CD4-positive, alpha-beta T cell (primary cell): ENCODE measurements at regions of chr9 and their contacts with region 1.

Region 1: DNA sequence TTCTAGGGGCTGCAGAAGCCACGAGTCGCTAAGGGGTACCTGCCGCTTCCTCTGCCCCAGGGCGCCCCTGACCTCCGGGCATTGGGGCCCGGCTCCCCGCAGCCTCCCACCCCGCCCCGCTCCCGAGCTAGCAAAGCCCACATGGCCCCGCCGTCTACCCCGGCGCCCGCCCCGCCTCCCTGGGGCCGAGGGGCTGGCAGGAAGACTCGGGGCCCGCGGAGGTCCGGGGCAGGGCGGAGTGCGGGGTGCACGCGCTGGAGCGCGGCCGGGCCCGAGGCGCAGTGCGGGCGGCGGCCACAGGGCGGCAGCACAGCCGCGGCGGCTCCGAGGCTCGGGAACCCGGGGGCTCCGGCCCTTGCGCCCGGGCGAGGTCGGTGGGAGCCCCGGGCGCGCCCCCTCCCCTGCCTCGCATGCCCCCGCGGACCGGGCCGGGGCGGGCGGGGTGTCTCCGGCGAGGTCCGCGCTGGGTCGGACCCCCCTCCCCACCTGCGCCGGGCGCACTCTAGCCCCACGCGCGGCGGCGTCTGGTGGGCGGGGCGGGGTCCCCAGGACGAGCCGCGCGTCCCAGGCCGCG is 6.7 kb downstream of the NRARP start:
- DNase-seq: peak in 11 of 14 experiments; percentile 26 to 79 (median 42)
- ATAC-seq: peak; percentile 89
- H3K4me3 ChIP-seq: peak overlapping the region; percentile 17
- H3K4me3 Mint-ChIP-seq: no peak overlapping the region
- H3K27ac ChIP-seq: no peak overlapping the region
- H3K27ac Mint-ChIP-seq: no peak overlapping the region
- H3K4me1 ChIP-seq: peaks cover 15% of the 10 kb centered on the region
- H3K4me1 Mint-ChIP-seq: no peaks in the 10 kb centered on the region
- H3K27me3 ChIP-seq: peaks cover 62 to 65% of the 10 kb centered on the region in 2 experiments
- H3K27me3 Mint-ChIP-seq: peaks cover 41% of the 10 kb centered on the region
- CTCF ChIP-seq: no peak

Region 2: GRCh38 chr9:137406876-137407589 is 111.7 kb after region 1 on chr9:
- CTCF ChIA-PET with region 1: no interaction called
- POLR2A ChIA-PET with region 1: no interaction called
- intact Hi-C with region 1: loop called (anchors 2 kb)
- DNase-seq: peak; percentile 42 to 82 (median 68)
- ATAC-seq: peak; percentile 99
- H3K4me3 ChIP-seq: no peak overlapping the region
- H3K4me3 Mint-ChIP-seq: no peak overlapping the region
- H3K27ac ChIP-seq: no peak overlapping the region
- H3K27ac Mint-ChIP-seq: no peak overlapping the region
- H3K4me1 ChIP-seq: peaks cover 29% of the 10 kb centered on the region
- H3K4me1 Mint-ChIP-seq: no peaks in the 10 kb centered on the region
- H3K27me3 ChIP-seq: peaks cover 0 to 10% of the 10 kb centered on the region in 2 experiments
- H3K27me3 Mint-ChIP-seq: peaks cover 5% of the 10 kb centered on the region
- CTCF ChIP-seq: peak; percentile 65

Region 3: DNA sequence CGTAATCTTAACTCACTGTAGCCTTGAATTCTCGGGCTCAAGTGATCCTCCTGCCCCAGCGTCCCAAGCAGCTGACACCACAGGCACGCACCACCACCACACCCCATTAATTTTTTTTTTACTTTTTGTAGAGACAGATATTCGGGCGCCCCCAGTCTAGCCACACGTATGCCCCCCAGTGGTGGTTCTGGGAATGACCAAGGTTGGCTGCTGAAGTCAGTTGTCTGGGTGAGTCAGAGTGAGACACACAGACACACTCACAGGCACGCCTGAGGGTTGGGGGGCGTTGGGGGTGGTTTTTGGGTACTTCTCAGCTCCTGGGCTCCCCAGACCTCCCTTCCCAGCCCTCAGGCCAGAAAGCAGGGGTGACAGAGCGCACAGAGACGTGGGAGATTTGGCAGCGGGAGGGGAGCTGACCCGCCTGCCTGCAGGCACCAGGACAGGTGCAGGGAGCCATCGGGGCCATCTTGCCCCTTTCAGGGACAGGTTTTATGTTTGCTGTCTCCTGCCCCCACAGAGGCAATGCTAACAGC is 150.0 kb after region 1 on chr9:
- CTCF ChIA-PET with region 1: no interaction called
- POLR2A ChIA-PET with region 1: no interaction called
- intact Hi-C with region 1: loop called in 1 of 2 experiments (anchors 5 kb)
- DNase-seq: peak; percentile 75 to 91 (median 84)
- ATAC-seq: peak; percentile 74
- H3K4me3 ChIP-seq: no peak overlapping the region
- H3K4me3 Mint-ChIP-seq: peak overlapping the region; percentile 49
- H3K27ac ChIP-seq: no peak overlapping the region
- H3K27ac Mint-ChIP-seq: peak overlapping the region; percentile 19
- H3K4me1 ChIP-seq: peaks cover 35% of the 10 kb centered on the region
- H3K4me1 Mint-ChIP-seq: peaks cover 31% of the 10 kb centered on the region
- H3K27me3 ChIP-seq: peaks cover 0 to 2% of the 10 kb centered on the region in 2 experiments
- H3K27me3 Mint-ChIP-seq: peaks cover 17% of the 10 kb centered on the region
- CTCF ChIP-seq: peak; percentile 79

Region 4: GRCh38 chr9:137521405-137521985 is 226.2 kb after region 1 on chr9:
- CTCF ChIA-PET with region 1: no interaction called
- POLR2A ChIA-PET with region 1: no interaction called
- intact Hi-C with region 1: loop called in 1 of 2 experiments (anchors 2 kb)
- DNase-seq: no peak
- ATAC-seq: no peak
- H3K4me3 ChIP-seq: no peak overlapping the region
- H3K4me3 Mint-ChIP-seq: no peak overlapping the region
- H3K27ac ChIP-seq: no peak overlapping the region
- H3K27ac Mint-ChIP-seq: no peak overlapping the region
- H3K4me1 ChIP-seq: peaks cover 3% of the 10 kb centered on the region
- H3K4me1 Mint-ChIP-seq: peaks cover 4% of the 10 kb centered on the region
- H3K27me3 ChIP-seq: no peaks in the 10 kb centered on the region
- H3K27me3 Mint-ChIP-seq: no peaks in the 10 kb centered on the region
- CTCF ChIP-seq: no peak